ENCODE measurements at regions of chr3 and their contacts with region 1.

Region 1: DNA sequence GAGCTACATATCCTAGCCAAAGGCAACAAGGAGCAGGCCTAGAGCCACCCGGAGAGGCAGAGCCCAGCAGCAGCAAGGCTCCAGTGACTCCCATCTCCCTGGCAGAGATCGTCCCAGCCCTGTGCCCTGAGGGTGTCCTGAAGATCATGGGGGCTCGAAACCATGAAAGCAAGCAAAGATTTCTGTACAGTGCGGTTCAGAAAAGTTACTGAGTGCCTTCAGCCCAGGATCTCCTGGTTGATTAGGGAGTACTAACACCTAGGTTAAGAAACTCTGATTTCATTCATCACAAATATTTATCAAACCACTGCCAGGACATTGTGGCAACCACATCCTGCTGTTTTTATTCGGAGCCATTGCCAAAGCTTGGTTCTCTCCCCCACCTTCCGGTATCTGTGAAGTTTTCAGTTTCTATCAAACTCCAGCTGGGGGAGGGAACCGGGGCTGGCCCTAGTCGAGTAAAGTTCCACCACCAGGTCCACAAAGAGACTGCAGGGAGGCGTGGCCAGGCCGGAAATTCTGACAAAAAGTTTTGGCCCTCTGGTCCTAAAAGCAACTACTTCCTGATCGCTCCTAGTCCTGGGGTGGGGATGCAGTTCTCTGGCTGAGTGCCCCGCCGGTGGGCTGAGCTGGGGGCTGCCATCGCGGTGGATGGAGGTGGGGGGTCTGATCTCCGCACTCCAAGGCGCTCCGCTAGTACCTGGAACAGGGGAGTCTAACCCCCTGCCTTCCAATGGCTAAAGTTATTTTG is 1.2 kb downstream of the RAB43 start:
- DNase-seq: peak; percentile 73 to 96 (median 87)
- ATAC-seq: peak; percentile 51 to 60
- H3K4me3 Mint-ChIP-seq: peak overlapping the region; percentile 83 to 99 (median 94)
- H3K27ac Mint-ChIP-seq: peak overlapping the region; percentile 88 to 99 (median 98)
- H3K4me1 Mint-ChIP-seq: peaks cover 21 to 68% (median 37%) of the 10 kb centered on the region in 4 donors
- H3K27me3 Mint-ChIP-seq: no peaks in the 10 kb centered on the region

Region 2: DNA sequence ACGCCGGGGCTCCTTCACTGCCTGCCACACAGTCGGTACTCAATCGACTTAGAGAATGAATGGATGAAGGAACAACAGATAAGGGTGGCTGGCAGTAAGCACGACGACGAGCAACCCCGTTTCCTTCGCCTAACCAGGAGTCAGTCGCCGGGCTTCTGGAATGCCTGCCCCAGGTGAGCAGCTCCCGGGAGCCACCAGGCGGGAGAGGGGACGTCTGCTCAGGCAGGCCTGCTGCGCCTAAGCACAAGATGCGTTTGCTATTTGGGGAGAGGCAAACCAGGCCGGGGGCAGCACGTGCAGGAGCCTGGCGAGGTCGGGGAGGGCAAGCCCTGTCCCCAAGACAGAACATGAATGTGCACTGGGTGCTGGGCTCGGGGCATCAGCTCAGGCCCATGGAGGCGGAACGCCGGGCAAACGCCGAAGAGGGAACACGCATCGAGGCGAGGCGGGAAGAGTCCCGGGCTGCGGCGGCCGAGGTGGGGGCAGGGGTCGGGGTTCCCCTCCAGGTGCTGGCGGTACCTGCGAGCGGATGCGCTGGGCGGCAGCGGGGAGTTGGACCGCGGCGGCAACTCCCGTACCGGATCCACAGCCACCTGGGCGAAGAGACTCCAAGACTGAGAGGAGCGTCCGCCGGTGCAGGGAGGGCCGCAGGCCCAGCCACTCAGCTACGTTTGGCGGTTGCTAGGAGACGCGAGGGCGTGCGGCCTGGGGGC is 126.8 kb before region 1 on chr3 and contains the start of gene CFAP92:
- POLR2A ChIA-PET with region 1: interaction called, 14 read pairs
- DNase-seq: peak; percentile 84 to 95 (median 90)
- ATAC-seq: peak; percentile 94 to 95
- H3K4me3 Mint-ChIP-seq: peak within 1 kb of the TSS; percentile 68 to 90 (median 84)
- H3K27ac Mint-ChIP-seq: peak within 1 kb of the TSS; percentile 60 to 94 (median 88)
- H3K4me1 Mint-ChIP-seq: peaks cover 23 to 39% (median 36%) of the 10 kb centered on the region in 4 donors
- H3K27me3 Mint-ChIP-seq: peaks cover 0 to 4% (median 0%) of the 10 kb centered on the region in 5 donors
- polyA plus RNA-seq, gene CFAP92: 0.18 to 0.23 (median 0.20) TPM

Region 3: DNA sequence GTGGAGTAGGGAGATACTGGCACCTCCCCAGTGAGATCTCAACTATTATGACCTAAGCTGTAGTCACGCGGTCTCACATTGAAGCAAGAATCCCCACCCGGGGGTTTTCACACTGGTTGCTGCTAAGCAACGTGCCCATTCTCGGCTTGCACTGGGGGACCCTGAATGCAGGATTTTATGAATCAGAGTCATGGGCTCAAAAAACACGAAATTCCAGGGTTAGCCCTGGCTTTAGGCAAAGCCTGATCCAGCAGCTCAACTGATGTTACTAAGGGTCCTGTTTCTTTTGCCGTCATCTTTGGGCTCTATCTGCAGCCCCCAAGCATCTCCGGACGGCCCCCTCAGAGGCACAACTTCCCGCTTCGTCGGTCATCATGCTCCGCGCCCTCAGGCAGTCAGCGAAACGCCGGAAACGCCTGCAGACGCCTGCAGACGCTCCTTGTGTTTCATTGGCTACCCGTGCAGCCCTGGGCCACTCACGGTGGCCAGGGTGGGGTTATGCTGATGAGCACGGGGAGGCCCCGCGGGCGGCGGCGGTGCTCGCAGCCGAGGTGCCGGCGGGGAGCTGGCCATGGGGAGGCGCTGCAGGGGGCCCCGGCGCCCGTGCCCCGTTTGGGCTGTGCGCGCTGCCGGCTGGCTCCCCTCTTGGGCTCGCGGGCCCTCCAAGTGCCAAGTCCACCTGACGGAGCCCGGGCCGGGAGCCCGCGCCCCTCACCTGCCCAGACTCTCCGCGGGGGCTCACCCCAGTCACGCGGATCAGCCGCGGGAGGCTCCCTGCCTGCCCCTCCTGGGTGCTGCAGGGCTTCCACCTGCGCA is 93.5 kb before region 1 on chr3:
- POLR2A ChIA-PET with region 1: interaction called, 43 read pairs
- DNase-seq: peak; percentile 87 to 96 (median 92)
- ATAC-seq: peak; percentile 97
- H3K4me3 Mint-ChIP-seq: peak overlapping the region; percentile 84 to 94 (median 90)
- H3K27ac Mint-ChIP-seq: peak overlapping the region; percentile 92 to 99 (median 98)
- H3K4me1 Mint-ChIP-seq: peaks cover 16 to 32% (median 30%) of the 10 kb centered on the region in 4 donors
- H3K27me3 Mint-ChIP-seq: no peaks in the 10 kb centered on the region

Region 4: DNA sequence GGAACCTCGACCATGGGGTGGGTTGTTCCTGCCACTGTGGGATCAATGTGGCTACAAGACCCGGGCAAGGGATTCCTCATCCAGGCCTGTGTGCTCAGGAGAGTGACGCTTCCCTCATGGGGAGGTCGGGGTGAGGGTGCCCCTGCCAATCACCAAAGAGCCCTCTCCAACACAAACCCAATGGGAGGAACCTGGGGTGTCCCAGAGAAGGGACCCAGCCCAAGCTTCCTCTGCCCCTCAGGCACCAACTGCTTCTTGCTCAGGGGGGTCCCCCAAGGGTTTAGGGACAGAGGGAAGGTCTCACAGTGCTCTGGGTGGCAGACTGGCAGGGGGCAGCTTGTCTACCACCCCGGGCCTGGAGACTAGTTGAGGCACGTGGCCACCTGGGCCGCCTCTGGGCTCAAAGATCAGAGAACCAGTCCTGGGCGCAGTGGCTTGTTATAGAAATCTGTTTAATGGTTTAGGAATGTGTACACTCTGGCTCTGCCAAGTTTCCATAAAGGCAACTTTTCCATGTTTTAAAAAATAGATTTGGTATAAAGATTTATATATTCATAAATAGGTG is 33.2 kb before region 1 on chr3:
- POLR2A ChIA-PET with region 1: interaction called, 20 read pairs
- DNase-seq: no peak
- ATAC-seq: no peak
- H3K4me3 Mint-ChIP-seq: no peak overlapping the region
- H3K27ac Mint-ChIP-seq: peak overlapping the region in 8 of 10 donors; percentile 18 to 88 (median 59)
- H3K4me1 Mint-ChIP-seq: peaks cover 7 to 37% (median 19%) of the 10 kb centered on the region in 4 donors
- H3K27me3 Mint-ChIP-seq: no peaks in the 10 kb centered on the region

Region 5: GRCh38 chr3:129132097-129132866 is 11.9 kb after region 1 on chr3:
- POLR2A ChIA-PET with region 1: interaction called, 61 read pairs
- DNase-seq: peak in 2 of 10 donors; percentile 30 to 32
- ATAC-seq: peak; percentile 78 to 83
- H3K4me3 Mint-ChIP-seq: peak overlapping the region in 9 of 10 donors; percentile 14 to 73 (median 42)
- H3K27ac Mint-ChIP-seq: peak overlapping the region; percentile 64 to 95 (median 85)
- H3K4me1 Mint-ChIP-seq: peaks cover 17 to 22% (median 19%) of the 10 kb centered on the region in 4 donors
- H3K27me3 Mint-ChIP-seq: no peaks in the 10 kb centered on the region

Region 6: DNA sequence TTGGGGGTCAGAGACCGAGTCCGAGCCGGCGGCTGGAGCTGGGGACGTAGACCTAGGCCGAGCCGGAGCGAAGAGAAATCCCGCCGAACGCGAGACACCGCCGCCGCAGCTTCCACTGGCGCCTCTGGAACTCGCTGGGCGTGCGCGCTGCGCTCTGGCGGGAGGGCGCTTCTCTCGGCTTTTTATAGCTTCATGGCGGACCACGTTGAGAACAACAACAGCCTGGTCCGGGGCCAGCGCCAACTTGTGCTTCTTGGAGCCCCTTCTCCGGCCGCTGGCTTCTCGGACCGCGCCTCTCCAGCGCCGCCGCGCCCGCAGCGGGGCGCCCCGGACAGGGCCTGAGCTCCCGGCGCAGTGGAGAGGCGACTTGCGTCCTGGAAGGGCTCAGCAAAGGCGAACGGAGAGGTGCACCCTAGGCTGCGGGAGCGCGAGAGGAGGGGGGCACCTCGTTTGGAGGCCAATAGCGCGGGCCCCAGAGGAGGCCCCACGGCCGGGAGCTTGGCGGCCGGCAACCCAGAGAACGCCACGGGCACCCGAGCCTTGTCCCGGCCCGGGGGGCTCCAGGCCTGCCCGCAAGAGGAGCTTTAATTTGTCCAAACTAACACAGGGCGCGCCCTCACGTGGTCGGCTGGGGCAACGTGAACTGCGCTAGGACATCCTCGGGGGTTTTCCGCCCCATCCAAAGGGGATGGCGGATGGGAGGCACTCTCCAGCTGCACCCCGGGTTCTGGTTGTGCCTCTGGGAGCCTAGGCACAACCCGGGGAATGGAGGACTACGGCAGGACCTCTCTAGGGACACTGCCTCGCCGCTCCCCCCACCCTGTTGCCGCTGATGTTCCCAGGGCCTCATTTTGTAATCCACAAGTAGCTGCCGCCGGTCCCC is 195.9 kb after region 1 on chr3:
- POLR2A ChIA-PET with region 1: interaction called, 65 read pairs
- DNase-seq: peak; percentile 75 to 92 (median 88)
- ATAC-seq: peak; percentile 54 to 59
- H3K4me3 Mint-ChIP-seq: peak overlapping the region; percentile 78 to 97 (median 89)
- H3K27ac Mint-ChIP-seq: peak overlapping the region; percentile 66 to 96 (median 88)
- H3K4me1 Mint-ChIP-seq: peaks cover 21 to 32% (median 31%) of the 10 kb centered on the region in 4 donors
- H3K27me3 Mint-ChIP-seq: no peaks in the 10 kb centered on the region

Region 7: DNA sequence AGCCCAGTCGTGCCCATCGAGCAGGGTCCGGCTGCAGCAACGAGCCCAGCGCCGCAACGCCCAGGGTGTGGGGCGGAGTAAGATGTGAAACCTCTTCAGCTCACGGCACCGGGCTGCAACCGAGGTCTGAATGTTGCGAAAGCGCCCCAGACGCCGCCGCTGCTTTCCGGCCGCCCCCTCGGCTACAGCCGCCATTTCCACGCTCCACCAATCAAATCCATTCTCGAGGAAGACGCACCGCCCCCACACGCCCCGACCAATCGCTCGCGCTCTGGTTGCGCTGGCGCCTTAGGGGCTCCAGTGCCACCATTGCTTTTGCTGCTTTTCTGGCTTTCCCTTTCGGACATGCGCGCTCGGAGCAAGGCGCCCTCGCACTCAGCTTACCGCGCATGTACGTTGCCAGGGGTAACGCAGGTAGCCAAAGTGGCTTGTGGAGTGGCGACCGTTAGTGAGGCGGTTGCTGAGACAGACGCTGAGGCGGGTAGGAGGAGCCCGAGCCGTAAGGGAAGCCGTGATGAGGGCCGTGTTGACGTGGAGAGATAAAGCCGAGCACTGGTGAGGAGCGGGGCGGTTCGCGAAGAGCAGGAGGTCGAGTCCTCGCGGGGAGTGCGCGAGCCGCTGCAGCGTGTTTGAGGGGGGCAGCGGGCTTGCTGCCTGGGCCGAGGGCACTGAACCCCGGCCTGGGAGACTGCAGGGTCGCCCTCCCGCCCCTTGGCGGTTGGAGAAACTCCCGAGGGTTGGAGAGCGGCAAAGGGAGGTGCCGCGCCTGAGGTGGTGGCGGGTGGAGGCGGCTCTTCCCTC is 319.6 kb after region 1 on chr3 and contains the starts of genes IFT122 and MBD4:
- POLR2A ChIA-PET with region 1: no interaction called
- DNase-seq: peak; percentile 92 to 99 (median 99)
- ATAC-seq: peak; percentile 87 to 88
- H3K4me3 Mint-ChIP-seq: peak within 1 kb of the TSS; percentile 90 to 99 (median 96)
- H3K27ac Mint-ChIP-seq: peak within 1 kb of the TSS; percentile 95 to 99 (median 98)
- H3K4me1 Mint-ChIP-seq: peaks cover 30 to 84% (median 67%) of the 10 kb centered on the region in 4 donors
- H3K27me3 Mint-ChIP-seq: no peaks in the 10 kb centered on the region
- polyA plus RNA-seq, gene IFT122: 3.3 to 6.5 (median 3.5) TPM
- polyA plus RNA-seq, gene MBD4: 33.6 to 40.0 (median 35.9) TPM

Measured in naive thymus-derived CD8-positive, alpha-beta T cell (primary cell).